Right ventricle myocardium inferior (tissue), 1 donor: ENCODE measurements at regions of chr9 and their contacts with region 1.

Region 1: GRCh38 chr9:21812946-21813568 is 10.6 kb downstream of the MTAP start:
- DNase-seq: peak; percentile 79
- ATAC-seq: peak; percentile 52

Region 2: GRCh38 chr9:21533597-21533996 is 279.5 kb before region 1 on chr9:
- intact Hi-C with region 1: no loop called
- DNase-seq: no peak
- ATAC-seq: no peak

Region 3: GRCh38 chr9:21696411-21696873 is 116.6 kb before region 1 on chr9:
- intact Hi-C with region 1: no loop called
- DNase-seq: peak; percentile 63
- ATAC-seq: no peak

Region 4: DNA sequence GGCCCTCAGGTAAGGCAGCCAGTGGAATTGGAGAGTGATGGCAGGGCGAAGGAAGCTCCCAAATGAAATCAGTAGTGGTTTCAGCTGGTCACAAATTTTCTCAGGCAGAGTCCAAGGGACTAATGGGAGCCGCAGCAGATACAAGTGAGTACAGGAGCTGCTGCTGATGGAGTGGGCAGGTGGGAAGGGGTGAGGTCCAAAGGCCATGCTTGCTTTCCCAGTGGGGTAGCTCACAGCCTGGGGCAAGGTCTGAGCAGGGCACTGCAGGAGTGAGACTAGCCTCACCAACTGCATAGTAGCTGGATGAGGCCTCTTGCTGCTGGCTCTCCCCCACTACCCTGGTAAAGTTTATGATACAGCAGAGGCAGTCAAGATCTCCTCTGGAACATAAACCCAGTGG is 27.6 kb after region 1 on chr9:
- intact Hi-C with region 1: no loop called
- DNase-seq: no peak
- ATAC-seq: no peak

Region 5: GRCh38 chr9:21889673-21890072 is 76.6 kb after region 1 on chr9:
- intact Hi-C with region 1: no loop called
- DNase-seq: no peak
- ATAC-seq: no peak

Region 6: DNA sequence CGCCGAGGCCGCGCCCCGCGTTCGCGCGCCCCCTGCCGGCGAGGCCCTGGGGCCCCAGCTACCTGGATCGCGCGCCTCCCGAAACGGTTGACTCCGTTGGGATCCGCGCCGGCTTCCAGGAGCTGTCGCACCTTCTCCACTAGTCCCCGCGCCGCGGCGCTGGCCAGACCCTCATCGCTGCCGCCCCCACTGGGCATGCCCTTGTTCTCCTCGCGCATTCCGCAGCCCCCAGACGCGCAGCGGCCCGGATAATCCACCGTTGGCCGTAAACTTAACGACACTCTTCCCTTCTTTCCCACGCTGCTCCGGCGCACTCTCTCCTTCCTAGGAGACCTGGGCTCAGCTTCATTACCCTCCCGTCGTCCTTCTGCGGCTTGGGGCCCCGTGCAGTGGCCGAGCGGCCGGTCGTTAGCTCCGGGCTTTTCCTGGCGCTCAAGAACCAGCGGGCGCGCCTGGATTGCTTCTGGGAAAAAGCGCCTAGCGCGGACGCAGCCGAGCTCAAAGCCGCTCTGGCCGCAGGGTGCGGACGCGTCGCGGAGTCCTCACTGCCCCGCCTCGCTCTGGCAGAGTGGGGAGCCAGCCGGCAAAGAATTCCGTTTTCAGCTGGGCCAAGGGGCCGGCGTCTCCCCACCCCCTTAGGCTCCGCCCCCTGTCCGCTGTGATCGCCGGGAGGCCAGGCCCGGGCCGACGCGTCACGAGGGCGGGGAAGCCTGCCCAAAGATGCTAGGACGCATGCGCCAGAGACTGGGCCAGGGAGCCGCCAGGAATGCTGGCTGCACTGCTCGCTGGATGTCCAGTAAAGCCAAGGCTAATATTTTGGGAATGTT is 195.9 kb after region 1 on chr9 and contains the start of gene CDKN2B:
- intact Hi-C with region 1: loop called (anchors 2 kb)
- DNase-seq: peak; percentile 96
- ATAC-seq: peak; percentile 100
- total RNA-seq, gene CDKN2B: 3.0 TPM

Region 7: GRCh38 chr9:22037954-22038690 is 225.1 kb after region 1 on chr9:
- intact Hi-C with region 1: loop called (anchors 2 kb)
- DNase-seq: no peak
- ATAC-seq: no peak

Region 8: DNA sequence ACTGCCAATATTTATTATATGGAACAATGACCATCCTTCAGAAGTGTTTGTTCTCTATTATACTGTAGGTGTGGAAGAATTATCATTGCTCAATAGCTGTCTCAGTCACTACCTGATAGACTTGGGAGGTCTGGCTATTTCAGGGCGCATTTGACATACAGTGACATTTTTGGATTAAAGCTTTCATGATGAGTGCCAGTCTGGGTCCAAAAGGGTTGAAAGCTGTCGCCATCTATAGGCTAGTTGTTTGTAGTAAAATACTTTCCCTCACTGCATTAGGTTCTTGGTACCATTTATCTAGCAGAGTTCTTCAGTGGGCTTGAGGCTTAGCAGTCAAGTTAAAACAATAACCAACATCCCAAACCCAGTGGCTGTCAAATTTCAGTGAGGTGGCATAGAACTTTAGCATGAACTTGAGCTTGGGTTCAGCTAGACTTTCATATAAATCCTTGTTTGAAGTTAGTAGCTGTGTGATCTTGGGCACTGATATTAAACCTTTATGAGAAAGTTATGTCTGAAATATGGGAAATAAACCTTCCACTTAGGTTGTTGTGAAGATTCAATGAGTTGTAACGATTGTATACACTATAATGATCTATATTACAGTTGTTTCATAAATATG is 306.6 kb after region 1 on chr9:
- intact Hi-C with region 1: loop called (anchors 5 kb)
- DNase-seq: no peak
- ATAC-seq: peak; percentile 57

Region 9: DNA sequence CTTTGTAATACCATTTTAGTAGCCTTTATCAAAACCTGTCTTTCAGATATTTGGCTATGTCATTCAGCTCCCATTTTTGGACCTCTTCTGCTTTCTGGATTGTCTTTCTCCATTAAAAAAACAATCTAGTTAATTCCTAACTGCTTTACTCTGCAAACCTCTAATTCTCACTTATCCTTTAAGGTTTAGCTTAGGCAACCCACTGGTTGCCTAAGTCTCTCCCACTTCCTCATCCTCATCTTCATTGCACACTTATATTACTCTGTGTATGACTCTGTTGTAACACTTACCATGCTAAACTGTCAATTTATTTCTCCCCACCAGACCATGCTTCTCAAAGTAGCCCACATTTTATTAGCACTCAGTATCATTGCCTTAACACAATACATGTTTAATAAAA is 428.6 kb after region 1 on chr9:
- intact Hi-C with region 1: loop called (anchors 2 kb)
- DNase-seq: no peak
- ATAC-seq: no peak

Region 10: GRCh38 chr9:22452415-22453010 is 639.5 kb after region 1 on chr9:
- intact Hi-C with region 1: loop called (anchors 5 kb)
- DNase-seq: no peak
- ATAC-seq: no peak